ENCODE measurements at regions of chr14 and their contacts with region 1.

Region 1: GRCh38 chr14:89416002-89416995 is 734 bp downstream of the FOXN3 start:
- DNase-seq: peak; percentile 100

Region 2: DNA sequence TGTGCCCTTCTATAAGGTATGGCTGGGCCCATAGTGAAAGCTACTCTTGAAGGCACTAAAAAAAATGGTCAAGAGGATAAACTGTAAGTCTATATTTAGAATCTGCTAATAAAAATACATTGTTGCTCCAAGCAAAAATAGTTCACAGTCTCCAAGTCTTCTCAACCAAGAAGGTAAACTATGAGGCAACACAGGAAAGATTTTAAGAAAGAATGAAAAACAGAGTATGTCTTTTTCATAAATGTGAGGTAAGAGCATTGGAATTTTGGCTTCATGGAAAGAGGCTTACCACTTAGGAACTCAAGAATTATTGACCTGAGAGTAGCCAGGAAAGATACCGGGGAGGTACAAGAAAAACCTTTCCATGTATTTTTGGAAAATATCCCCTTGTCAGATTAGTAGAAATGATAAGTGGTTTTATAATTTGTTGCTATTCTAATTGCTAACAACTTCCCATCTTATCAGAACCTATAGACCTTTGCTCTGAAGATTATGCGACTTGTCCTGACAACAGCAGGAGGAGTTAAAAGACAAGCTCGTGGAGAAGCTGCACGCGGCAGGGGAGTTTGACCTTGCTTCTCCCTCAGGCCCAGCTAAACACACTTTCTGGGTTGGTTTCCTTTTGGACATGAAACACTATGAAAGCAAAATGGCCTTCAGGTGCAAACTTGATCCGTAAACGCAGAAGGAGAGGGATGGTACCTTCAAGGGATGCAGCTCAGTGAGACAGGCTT is 237.3 kb before region 1 on chr14:
- intact Hi-C with region 1: loop called (anchors 5 kb)
- DNase-seq: no peak

Region 3: DNA sequence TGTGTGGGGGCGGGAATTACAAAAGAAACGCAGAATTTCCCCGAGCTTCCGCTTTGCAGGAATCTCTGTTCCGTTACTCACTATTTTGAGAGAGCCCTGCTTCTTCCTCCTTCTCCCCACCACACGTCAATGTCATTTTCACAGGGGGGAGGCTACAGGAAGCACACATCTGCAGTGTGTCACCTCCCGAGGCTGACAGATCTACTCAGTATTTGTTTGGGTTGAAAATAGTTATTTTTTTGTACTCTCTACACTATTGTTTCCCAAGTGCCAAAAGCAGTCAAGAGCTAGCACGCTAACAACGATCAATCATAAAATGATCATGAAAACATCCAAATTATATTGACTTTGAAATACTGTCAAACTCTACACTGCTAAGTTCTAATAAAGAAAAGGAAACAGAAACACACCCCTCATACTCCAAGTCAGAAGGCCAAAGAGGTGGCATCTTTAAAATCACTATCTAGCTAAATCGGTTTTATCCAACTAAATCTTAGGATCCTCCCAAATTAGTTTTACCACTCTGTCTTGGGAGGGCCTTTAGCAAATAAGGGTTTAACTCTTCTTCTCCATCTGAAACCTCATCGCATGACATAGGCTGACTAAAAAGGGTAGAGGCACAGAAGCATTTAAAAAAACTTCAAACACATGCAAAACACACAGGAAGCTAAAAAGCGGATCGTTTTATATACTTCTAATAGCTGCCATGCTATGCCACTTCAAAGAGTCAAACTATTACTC is 51.1 kb before region 1 on chr14:
- intact Hi-C with region 1: loop called (anchors 5 kb)
- DNase-seq: no peak

Region 4: GRCh38 chr14:89618811-89619551 is 202.7 kb after region 1 on chr14:
- intact Hi-C with region 1: loop called (anchors 2 kb)
- DNase-seq: peak; percentile 89

Measured in cardiac septum (tissue), 1 donor.